Right ventricle myocardium inferior (tissue), 1 donor: ENCODE measurements at regions of chr12 and their contacts with region 1.

Region 1: DNA sequence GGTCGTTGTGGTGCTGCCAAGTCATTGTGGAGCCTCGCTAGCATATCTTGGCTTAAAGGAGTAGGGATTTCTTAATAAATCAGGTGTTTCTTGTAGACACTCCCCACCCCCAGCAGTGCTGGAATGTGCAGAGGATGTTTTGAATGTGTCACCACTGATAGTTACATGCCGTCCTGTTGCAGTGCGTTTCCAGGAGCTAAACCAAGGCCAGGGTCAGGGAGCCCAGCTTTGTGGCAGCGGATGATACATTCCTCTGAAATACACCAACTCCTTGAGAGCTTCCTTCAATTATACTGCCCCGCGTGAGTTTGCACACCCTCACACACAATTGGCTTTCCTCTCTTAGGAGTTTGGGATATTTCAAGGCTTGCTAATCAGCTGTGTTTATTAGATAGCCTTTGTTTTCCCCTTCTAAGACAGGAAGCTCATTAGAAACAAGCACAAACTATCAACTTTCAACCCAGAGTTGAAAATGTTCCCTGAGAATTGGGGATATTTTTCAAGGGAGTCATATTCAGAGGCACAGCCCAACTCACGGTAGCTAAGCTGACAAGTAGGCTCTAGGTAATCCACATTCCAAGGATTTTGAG is 154.9 kb downstream of the C12orf75 start:
- DNase-seq: peak; percentile 70
- ATAC-seq: peak; percentile 64

Region 2: DNA sequence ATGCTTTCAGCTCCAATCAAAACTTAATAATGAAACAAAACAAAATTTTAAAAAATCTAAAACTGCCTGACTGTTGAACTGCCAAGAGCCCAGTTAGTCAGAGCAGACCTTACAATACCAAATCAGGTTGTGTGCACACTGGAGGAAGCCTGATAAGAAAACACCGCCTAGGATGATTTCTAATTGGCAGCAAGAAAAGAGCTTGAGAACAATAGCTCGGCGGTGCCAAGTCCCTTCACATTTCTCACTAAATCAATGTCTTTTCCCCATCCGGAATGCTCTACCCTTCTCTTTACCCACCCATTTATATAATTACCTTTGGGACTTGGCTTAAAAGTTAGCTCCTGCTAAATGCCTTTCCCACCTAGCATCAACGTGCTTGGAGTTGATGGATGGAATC is 101.8 kb after region 1 on chr12:
- intact Hi-C with region 1: loop called (anchors 5 kb)
- DNase-seq: no peak
- ATAC-seq: no peak

Region 3: GRCh38 chr12:105659355-105660075 is 174.1 kb after region 1 on chr12:
- intact Hi-C with region 1: loop called (anchors 10 kb)
- DNase-seq: no peak
- ATAC-seq: peak; percentile 85